ENCODE measurements at regions of chr15 and their contacts with region 1.

Region 1: DNA sequence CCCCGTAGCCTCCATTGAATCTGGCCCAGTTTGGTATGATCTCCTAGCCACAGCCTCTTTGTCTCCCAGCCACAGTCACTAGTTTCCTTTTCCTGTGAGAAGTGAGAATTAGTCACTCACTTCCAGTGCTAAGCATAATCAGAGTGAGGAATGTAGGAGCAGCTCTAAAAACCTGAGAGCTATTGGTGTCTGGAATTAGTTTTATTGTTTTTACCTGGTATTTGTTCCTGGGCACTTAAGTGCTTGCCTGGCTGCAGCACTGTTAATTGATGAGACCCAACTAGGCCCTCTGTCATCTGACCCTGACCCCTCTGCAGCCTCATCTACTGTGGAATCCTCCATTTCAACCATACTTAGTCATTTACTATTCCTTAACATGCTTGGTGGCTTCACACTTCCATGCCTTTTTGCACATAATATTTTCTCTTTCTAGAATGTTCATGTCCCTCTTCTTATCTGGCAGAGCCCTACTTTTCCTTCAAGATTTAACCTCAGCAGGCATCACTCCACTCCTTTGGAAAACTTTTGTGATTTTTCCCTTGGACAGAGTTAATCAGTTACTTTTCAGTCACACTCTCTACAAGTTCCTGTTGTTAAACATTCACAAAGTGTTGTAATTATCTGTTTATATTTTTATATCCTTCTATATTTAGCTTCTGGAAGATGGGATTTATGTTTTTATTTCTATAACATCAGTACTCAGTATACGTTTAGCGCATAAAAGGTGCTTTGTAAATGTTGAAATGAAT is 48.8 kb downstream of the PDE8A start:
- DNase-seq: no peak
- H3K4me3 ChIP-seq: no peak overlapping the region
- H3K27ac ChIP-seq: no peak overlapping the region
- H3K4me1 ChIP-seq: no peaks in the 10 kb centered on the region
- H3K27me3 ChIP-seq: no peaks in the 10 kb centered on the region
- CTCF ChIP-seq: no peak
- POLR2A ChIP-seq: no peak

Region 2: GRCh38 chr15:84961114-84961452 is 69.4 kb before region 1 on chr15:
- intact Hi-C with region 1: loop called (anchors 10 kb)
- DNase-seq: no peak
- H3K4me3 ChIP-seq: no peak overlapping the region
- H3K27ac ChIP-seq: no peak overlapping the region
- H3K4me1 ChIP-seq: no peaks in the 10 kb centered on the region
- H3K27me3 ChIP-seq: no peaks in the 10 kb centered on the region
- CTCF ChIP-seq: no peak
- POLR2A ChIP-seq: no peak

Region 3: DNA sequence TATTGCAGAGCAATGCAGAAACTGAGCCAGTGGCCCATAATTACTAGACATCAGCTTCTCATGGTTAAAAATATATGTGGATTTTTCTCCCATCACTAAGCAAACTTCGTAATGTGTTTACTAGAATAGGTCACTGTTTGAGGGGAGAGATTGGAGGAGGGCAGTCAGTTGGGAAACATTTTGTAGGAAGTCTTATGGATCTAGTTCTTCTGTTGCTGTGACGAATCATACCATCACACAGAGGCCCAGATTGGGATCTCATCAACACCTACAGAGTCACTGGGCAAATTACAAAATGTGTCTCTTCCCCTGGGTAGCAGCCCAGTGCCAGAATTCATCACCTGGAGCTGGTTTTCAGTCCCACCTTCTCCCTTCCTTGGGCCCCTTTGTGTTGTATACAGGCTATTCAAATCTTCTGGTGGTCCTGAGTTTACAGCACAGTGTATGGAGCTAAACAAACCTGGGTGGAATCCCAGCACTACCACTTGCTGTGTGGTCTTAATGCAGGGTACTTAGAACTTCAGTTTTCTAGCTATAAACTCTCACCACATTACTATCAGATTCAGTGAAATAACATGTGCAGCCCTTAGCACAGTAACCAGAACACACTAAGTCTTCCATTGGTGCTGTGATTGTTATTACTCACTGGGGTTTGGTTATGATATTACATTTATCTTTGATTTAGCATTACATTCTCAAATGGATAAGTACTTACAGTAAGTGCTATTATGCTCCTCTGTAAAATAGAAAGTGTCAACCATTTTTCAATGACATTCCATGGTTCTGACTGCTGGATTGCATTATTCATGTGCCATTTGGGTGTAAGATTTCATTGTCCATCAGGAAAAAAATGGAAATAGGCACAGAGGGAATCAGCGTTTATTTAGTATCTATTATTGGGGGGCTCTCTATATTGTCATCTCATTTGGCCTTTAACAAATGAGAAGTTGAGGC is 32.9 kb after region 1 on chr15:
- intact Hi-C with region 1: no loop called
- DNase-seq: no peak
- H3K4me3 ChIP-seq: no peak overlapping the region
- H3K27ac ChIP-seq: no peak overlapping the region
- H3K4me1 ChIP-seq: no peaks in the 10 kb centered on the region
- H3K27me3 ChIP-seq: no peaks in the 10 kb centered on the region
- CTCF ChIP-seq: no peak
- POLR2A ChIP-seq: no peak

Region 4: GRCh38 chr15:85910834-85911233 is 880.4 kb after region 1 on chr15:
- intact Hi-C with region 1: no loop called
- DNase-seq: peak; percentile 23 to 54
- H3K4me3 ChIP-seq: no peak overlapping the region
- H3K27ac ChIP-seq: no peak overlapping the region
- H3K4me1 ChIP-seq: no peaks in the 10 kb centered on the region
- H3K27me3 ChIP-seq: no peaks in the 10 kb centered on the region
- CTCF ChIP-seq: no peak
- POLR2A ChIP-seq: no peak